ENCODE measurements at regions of chr5 and their contacts with region 1.

Region 1: DNA sequence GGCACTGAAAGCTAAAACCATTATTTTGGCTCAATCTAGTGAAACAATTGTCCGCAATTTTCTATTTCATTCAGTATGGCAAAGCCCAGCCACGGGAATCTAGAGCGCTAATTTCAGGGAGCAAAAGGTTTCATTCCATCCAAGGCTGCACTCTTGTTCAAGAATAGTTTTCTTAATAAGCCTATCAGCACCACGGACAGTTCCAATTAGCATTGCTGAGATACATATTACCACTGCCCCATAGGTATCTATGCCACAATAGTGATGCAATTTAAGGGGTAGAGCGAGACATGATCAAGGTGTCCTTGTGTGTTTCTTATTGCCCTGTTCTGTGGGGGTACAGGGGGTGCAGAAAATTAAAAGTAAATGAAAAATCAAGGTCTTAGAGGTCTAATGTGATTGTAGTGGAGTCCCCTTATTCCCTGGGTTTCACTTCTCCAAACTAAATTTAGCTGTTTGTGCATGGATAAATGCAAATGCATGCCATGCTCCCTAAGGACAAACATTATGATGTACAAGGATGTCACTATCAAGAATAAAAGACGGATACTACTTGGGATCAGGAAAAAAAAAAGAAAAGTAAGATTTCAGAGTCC is 45.5 kb downstream of the SPOCK1 start:
- DNase-seq: no peak
- H3K4me3 ChIP-seq: no peak overlapping the region
- H3K27ac ChIP-seq: peak overlapping the region in 2 of 59 donors; percentile 6 to 36
- H3K27me3 ChIP-seq: no peaks in the 10 kb centered on the region
- CTCF ChIP-seq: no peak

Region 2: GRCh38 chr5:136717917-136718316 is 735.7 kb before region 1 on chr5:
- intact Hi-C with region 1: no loop called
- DNase-seq: no peak
- H3K4me3 ChIP-seq: no peak overlapping the region
- H3K27ac ChIP-seq: no peak overlapping the region
- H3K27me3 ChIP-seq: no peaks in the 10 kb centered on the region
- CTCF ChIP-seq: no peak

Region 3: DNA sequence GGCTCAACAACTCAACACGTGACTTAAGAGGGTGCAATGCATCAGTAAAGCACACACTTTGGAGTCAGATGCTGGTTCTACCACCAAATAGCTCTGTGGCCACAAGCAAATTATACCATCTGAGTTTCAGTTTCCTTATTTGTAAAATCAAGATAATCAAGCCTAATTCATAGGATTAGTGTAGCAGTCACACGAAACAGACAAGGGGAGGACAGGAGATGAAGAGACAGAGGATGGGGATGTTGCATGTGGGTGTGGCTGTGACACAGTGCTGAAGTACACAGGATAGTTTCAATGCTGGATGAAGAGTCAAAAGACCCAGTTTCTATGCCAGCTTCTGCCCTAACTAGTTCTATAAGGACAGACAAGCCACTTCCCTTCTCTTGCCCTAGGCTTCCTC is 14.7 kb before region 1 on chr5:
- intact Hi-C with region 1: loop called in 1 of 2 experiments (anchors 1 kb)
- DNase-seq: no peak
- H3K4me3 ChIP-seq: no peak overlapping the region
- H3K27ac ChIP-seq: peak overlapping the region in 17 of 59 donors; percentile 11 to 67 (median 35)
- H3K27me3 ChIP-seq: no peaks in the 10 kb centered on the region
- CTCF ChIP-seq: no peak

Region 4: GRCh38 chr5:137688210-137688840 is 234.7 kb after region 1 on chr5:
- intact Hi-C with region 1: no loop called
- DNase-seq: peak in 1 of 10 donors; percentile 43
- H3K4me3 ChIP-seq: no peak overlapping the region
- H3K27ac ChIP-seq: peak overlapping the region in 1 of 59 donors; percentile 37
- H3K27me3 ChIP-seq: no peaks in the 10 kb centered on the region
- CTCF ChIP-seq: no peak

Measured in dorsolateral prefrontal cortex (tissue), 120 donors.